ENCODE measurements at regions of chr6 and their contacts with region 1.

Region 1: GRCh38 chr6:7910654-7911344 is at the start of gene TXNDC5:
- DNase-seq: peak; percentile 75
- H3K4me3 ChIP-seq: peak within 1 kb of the TSS; percentile 92
- H3K27ac ChIP-seq: peak within 1 kb of the TSS; percentile 96
- H3K4me1 ChIP-seq: peaks cover 78% of the 10 kb centered on the region
- CTCF ChIP-seq: no peak
- total RNA-seq, gene TXNDC5: 280 and 319 TPM in 2 replicates

Region 2: GRCh38 chr6:7899101-7899888 is 11.5 kb before region 1 on chr6:
- CTCF ChIA-PET with region 1: interaction called, 4 read pairs
- POLR2A ChIA-PET with region 1: interaction called, 39 read pairs
- intact Hi-C with region 1: no loop called
- DNase-seq: peak; percentile 59
- H3K4me3 ChIP-seq: no peak overlapping the region
- H3K27ac ChIP-seq: peak overlapping the region; percentile 78
- H3K4me1 ChIP-seq: peaks cover 65% of the 10 kb centered on the region
- CTCF ChIP-seq: peak; percentile 76

Region 3: GRCh38 chr6:7939184-7939863 is 28.5 kb after region 1 on chr6:
- CTCF ChIA-PET with region 1: interaction called, 3 read pairs
- POLR2A ChIA-PET with region 1: interaction called, 58 read pairs
- intact Hi-C with region 1: no loop called
- DNase-seq: no peak
- H3K4me3 ChIP-seq: no peak overlapping the region
- H3K27ac ChIP-seq: no peak overlapping the region
- H3K4me1 ChIP-seq: peaks cover 20% of the 10 kb centered on the region
- CTCF ChIP-seq: no peak

Region 4: DNA sequence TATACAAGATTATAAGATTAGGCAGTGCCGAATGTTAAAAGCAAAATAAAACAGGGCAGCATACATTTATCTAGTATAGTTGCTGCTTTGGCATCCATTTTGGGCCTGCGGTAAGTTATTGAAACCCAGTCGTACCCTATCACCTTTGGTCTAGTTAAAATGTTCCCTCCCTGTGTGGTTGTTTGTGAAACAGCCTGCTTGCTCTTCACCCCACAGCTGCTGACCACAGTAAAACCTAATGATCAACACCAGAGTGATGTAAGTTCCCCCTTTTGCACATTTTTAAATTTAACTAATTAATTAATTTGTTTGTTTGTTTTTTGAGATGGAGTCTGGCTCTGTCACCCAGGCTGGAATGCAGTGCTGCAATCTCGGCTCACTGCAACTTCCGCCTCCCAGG is 50.0 kb after region 1 on chr6:
- CTCF ChIA-PET with region 1: no interaction called
- POLR2A ChIA-PET with region 1: interaction called, 20 read pairs
- intact Hi-C with region 1: no loop called
- DNase-seq: no peak
- H3K4me3 ChIP-seq: no peak overlapping the region
- H3K27ac ChIP-seq: no peak overlapping the region
- H3K4me1 ChIP-seq: peaks cover 25% of the 10 kb centered on the region
- CTCF ChIP-seq: no peak

Region 5: GRCh38 chr6:7992002-7992815 is 81.4 kb after region 1 on chr6:
- CTCF ChIA-PET with region 1: no interaction called
- POLR2A ChIA-PET with region 1: interaction called, 7 read pairs
- intact Hi-C with region 1: loop called (anchors 2 kb)
- DNase-seq: peak; percentile 76
- H3K4me3 ChIP-seq: no peak overlapping the region
- H3K27ac ChIP-seq: no peak overlapping the region
- H3K4me1 ChIP-seq: peaks cover 10% of the 10 kb centered on the region
- CTCF ChIP-seq: peak; percentile 89